Cardiac septum (tissue), 1 donor: ENCODE measurements at regions of chr12 and their contacts with region 1.

Region 1: DNA sequence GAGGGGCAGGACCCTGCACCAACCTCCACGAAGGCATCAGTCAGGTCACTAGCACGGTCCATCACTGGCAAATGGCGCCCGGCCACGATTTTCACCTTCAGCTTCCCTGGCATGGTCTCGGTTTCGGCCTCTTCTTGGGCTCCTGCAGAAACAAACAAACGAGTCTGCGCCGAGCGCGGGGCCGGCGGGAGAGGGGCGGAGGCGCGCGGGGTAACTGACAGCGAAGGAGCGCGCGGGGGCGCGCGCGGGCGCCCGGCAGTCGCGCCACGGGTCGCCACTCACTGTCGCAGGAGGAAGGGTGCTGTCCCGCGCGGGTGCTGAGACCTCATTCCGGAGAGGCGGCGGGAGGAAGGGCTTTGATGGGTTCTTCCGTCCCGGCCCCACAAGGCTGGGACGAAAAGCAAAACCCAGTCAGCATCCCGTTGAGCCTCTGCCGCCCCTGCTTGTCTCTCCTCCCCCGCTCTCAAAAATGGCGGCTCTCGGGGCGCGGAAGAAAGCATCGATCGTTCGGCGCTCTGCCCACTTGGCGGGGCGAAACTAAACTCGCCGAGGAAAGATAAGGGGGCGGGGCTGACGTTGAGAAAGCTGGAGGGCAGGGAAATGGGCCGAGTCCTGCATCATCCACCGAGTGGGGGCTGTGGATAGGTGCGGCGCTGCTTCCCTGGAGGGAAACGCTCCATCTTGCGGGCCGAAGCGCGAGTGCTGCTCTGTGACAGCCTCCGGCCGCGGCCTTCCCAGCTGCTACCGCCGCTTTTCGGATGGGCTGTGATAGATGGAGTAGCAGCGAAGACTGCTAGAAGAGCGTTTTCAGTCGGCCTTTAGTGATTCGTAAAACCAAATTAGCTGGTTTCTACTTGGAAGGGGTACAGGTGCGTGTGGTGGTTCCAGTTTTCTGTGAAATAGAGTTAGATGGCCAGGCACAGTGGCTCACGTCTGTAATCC is at the start of gene C2CD5:
- DNase-seq: peak; percentile 97
- total RNA-seq, gene C2CD5: 18.2 TPM

Region 2: DNA sequence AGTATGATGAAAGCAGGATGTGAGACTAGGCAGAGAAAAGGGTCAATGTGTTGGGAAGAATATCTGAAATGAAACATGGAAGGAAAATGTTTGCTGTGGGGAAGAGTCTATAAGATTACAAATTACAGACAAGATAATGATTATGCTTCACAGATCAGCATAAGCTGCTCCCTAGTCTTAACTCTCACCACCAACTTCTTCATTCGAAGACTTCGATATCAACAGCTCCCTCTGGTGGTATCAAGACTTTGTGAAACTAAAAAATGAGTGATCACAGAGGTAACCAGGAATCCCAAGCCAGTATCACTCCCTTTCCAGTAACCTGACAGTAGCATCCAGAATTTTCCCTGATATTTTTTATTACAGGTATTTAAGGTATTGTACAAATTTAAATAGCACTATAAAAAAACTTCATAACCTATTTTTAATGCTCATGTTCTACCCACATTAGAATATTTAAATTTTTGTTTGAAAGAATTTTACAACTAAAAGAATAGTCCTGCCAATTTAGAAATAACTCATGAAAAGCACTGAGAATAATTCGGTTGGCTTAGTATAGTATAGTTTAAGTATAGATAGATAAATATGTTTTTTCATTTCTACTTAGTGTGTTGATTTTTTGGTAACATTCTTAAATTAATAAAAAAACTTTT is 84.3 kb before region 1 on chr12:
- intact Hi-C with region 1: no loop called
- DNase-seq: no peak

Region 3: GRCh38 chr12:22624870-22625761 is 80.8 kb after region 1 on chr12 and contains the start of gene ETNK1:
- intact Hi-C with region 1: loop called (anchors 1 kb)
- DNase-seq: peak; percentile 97
- total RNA-seq, gene ETNK1: 20.6 TPM